MCF 10A (cell line): ENCODE measurements at regions of chr1 and their contacts with region 1.

Region 1: GRCh38 chr1:33007190-33008050 is 29.3 kb downstream of the AK2 start:
- DNase-seq: peak; percentile 94
- H3K4me3 Mint-ChIP-seq: no peak overlapping the region
- H3K27ac Mint-ChIP-seq: peak overlapping the region; percentile 89
- H3K4me1 Mint-ChIP-seq: peaks cover 61% of the 10 kb centered on the region
- H3K27me3 Mint-ChIP-seq: no peaks in the 10 kb centered on the region
- CTCF ChIP-seq: peak; percentile 61

Region 2: DNA sequence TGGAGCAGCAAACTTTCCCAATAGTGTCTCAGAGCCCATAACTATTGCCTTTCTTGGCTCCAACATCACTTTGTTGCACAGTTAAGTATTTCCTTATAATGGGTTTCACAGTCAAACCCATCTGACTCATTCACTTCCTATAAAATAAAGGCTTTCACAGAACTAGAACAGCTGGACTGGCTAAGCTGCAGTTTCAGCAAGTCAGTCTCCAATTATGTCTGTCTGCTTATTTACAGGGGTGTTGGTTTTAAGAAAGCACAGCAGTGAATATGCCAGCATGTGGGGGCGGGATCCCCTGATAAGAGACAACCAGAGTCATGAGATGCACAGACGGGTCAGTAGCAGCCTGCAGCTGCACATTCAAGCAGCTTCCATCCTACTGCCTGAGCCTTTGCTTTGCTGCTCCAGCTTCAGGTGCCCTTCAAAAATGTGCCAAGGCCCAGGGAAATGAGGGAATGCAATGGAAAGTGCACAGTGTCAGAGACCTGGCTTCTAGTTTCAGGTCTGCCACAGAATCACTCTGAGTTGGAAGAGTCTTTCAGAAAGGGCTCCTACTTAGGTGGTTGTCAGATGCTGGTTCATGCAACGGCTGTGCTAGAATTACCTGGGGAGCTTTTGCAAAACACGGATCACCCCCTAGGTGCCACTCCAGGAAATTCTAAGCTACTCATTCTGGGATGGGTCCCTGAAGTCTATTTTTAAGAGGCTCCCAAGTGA is 67.6 kb before region 1 on chr1:
- CTCF ChIA-PET with region 1: interaction called, 140 read pairs
- POLR2A ChIA-PET with region 1: interaction called, 63 read pairs
- intact Hi-C with region 1: no loop called
- DNase-seq: peak; percentile 83
- H3K4me3 Mint-ChIP-seq: no peak overlapping the region
- H3K27ac Mint-ChIP-seq: peak overlapping the region; percentile 81
- H3K4me1 Mint-ChIP-seq: peaks cover 9% of the 10 kb centered on the region
- H3K27me3 Mint-ChIP-seq: no peaks in the 10 kb centered on the region
- CTCF ChIP-seq: no peak

Region 3: GRCh38 chr1:32972814-32973428 is 34.5 kb before region 1 on chr1:
- CTCF ChIA-PET with region 1: interaction called, 12 read pairs
- POLR2A ChIA-PET with region 1: interaction called, 7 read pairs
- intact Hi-C with region 1: no loop called
- DNase-seq: no peak
- H3K4me3 Mint-ChIP-seq: peak overlapping the region; percentile 71
- H3K27ac Mint-ChIP-seq: peak overlapping the region; percentile 66
- H3K4me1 Mint-ChIP-seq: peaks cover 13% of the 10 kb centered on the region
- H3K27me3 Mint-ChIP-seq: no peaks in the 10 kb centered on the region
- CTCF ChIP-seq: no peak

Region 4: DNA sequence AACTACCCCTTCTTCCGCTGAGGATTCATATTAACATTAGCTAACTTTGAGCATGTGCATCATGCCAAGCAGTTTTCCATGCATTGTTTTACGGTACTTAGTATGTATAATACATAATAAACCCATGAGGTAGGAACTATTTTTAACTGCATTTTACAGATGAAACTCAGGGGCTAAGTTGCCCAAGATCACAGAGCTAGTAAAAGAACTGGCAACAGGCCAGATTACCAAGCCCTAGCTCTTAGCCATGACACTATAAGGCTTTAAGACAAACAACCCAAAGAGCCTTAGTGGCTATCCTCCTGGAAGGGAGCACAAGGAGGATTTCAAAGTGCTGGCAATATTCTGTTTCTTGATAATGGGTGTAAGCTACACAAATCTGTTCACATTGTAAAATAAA is 23.2 kb after region 1 on chr1:
- CTCF ChIA-PET with region 1: interaction called, 15 read pairs
- POLR2A ChIA-PET with region 1: interaction called, 31 read pairs
- intact Hi-C with region 1: no loop called
- DNase-seq: peak; percentile 81
- H3K4me3 Mint-ChIP-seq: no peak overlapping the region
- H3K27ac Mint-ChIP-seq: no peak overlapping the region
- H3K4me1 Mint-ChIP-seq: peaks cover 40% of the 10 kb centered on the region
- H3K27me3 Mint-ChIP-seq: no peaks in the 10 kb centered on the region
- CTCF ChIP-seq: no peak

Region 5: GRCh38 chr1:33080885-33081553 is 73.6 kb after region 1 on chr1 and contains the start of gene AZIN2:
- CTCF ChIA-PET with region 1: interaction called, 11 read pairs
- POLR2A ChIA-PET with region 1: interaction called, 4 read pairs
- intact Hi-C with region 1: loop called (anchors 5 kb)
- DNase-seq: peak; percentile 94
- H3K4me3 Mint-ChIP-seq: peak within 1 kb of the TSS; percentile 75
- H3K27ac Mint-ChIP-seq: peak within 1 kb of the TSS; percentile 59
- H3K4me1 Mint-ChIP-seq: peaks cover 20% of the 10 kb centered on the region
- H3K27me3 Mint-ChIP-seq: no peaks in the 10 kb centered on the region
- CTCF ChIP-seq: no peak
- total RNA-seq, gene AZIN2: 1.6 and 4.3 TPM in 2 replicates

Region 6: GRCh38 chr1:33119532-33120217 is 112.3 kb after region 1 on chr1:
- CTCF ChIA-PET with region 1: no interaction called
- POLR2A ChIA-PET with region 1: no interaction called
- intact Hi-C with region 1: no loop called
- DNase-seq: no peak
- H3K4me3 Mint-ChIP-seq: no peak overlapping the region
- H3K27ac Mint-ChIP-seq: no peak overlapping the region
- H3K4me1 Mint-ChIP-seq: no peaks in the 10 kb centered on the region
- H3K27me3 Mint-ChIP-seq: no peaks in the 10 kb centered on the region
- CTCF ChIP-seq: no peak

Region 7: DNA sequence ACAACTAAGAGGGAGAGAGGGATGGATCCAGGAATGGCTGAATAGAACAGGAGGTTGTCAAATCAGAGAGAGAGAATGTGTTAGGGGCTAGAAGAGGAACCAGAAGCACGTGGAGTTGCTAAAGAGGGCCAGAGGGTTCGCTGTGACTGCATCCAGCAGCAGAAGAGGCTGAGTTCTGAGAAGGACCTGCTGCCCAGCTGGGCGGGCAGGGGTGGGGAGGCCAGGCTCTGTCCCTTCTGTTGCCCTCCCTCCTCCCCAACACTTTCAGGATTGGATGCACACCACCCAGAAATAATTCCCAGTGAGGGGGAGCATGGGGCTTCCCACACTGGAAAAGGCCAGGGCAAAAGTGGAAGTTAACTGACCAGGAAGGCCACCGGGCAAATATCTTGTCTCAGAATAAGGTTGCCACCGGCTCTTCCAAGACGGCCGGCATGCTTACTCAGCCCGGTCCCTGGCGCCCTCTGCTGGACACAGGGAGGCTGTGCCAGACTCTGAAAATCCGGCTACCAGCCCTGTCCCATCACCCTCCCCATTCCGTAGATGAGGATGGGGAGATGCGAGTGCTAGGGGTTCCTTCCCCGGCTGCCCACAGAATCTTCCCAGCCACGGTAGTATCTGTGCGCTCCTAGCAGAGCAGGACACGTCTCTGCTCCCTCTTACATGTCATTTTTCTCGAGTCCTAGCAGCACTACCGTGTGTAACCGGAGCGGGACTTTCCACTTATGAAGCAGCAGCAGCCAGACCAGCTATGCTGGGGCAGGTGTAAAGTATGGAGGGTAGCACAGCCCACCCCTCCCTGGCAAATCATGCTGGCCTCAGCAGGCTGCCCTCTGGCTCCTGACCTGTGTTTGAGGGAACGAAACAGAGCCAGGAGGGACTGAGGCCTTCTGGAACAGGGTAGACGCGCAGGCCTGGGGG is 360.3 kb after region 1 on chr1:
- CTCF ChIA-PET with region 1: no interaction called
- POLR2A ChIA-PET with region 1: no interaction called
- intact Hi-C with region 1: no loop called
- DNase-seq: peak; percentile 84
- H3K4me3 Mint-ChIP-seq: no peak overlapping the region
- H3K27ac Mint-ChIP-seq: no peak overlapping the region
- H3K4me1 Mint-ChIP-seq: peaks cover 6% of the 10 kb centered on the region
- H3K27me3 Mint-ChIP-seq: no peaks in the 10 kb centered on the region
- CTCF ChIP-seq: peak; percentile 95

Region 8: DNA sequence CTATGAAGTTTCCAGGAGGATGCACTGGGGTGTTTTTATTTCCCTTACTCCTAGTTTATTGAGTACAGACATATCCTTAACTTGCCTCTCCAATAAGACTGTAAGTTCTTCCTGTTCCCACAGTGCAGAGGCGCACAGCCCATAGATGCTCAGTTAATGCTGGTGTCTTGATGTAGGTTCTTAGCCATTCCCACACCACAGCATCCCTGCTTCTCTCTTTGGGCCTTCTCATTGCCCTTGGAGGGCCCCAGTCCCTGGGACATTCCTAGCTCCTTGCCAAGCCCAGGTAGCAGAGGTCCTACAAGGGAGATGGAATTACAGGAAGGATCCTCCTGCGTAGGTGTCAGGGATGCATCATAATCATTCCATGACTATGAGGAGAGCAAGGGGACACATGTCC is 794.8 kb after region 1 on chr1:
- CTCF ChIA-PET with region 1: no interaction called
- POLR2A ChIA-PET with region 1: no interaction called
- intact Hi-C with region 1: no loop called
- DNase-seq: no peak
- H3K4me3 Mint-ChIP-seq: no peak overlapping the region
- H3K27ac Mint-ChIP-seq: no peak overlapping the region
- H3K4me1 Mint-ChIP-seq: no peaks in the 10 kb centered on the region
- H3K27me3 Mint-ChIP-seq: no peaks in the 10 kb centered on the region
- CTCF ChIP-seq: no peak